Sigmoid colon (tissue), 7 donors: ENCODE measurements at regions of chr3 and their contacts with region 1.

Region 1: GRCh38 chr3:54374214-54374855 is 252.0 kb downstream of the CACNA2D3 start:
- DNase-seq: no peak
- H3K4me3 ChIP-seq: no peak overlapping the region
- H3K27ac ChIP-seq: no peak overlapping the region
- H3K4me1 ChIP-seq: no peaks in the 10 kb centered on the region
- H3K27me3 ChIP-seq: no peaks in the 10 kb centered on the region
- CTCF ChIP-seq: peak in 3 of 4 experiments; percentile 25 to 41 (median 32)
- EP300 ChIP-seq: no peak
- POLR2A ChIP-seq: no peak

Region 2: GRCh38 chr3:53941956-53942355 is 432.4 kb before region 1 on chr3:
- intact Hi-C with region 1: loop called (anchors 10 kb)
- DNase-seq: no peak
- H3K4me3 ChIP-seq: no peak overlapping the region
- H3K27ac ChIP-seq: no peak overlapping the region
- H3K4me1 ChIP-seq: peaks cover 0 to 3% (median 0%) of the 10 kb centered on the region in 4 donors
- H3K27me3 ChIP-seq: no peaks in the 10 kb centered on the region
- CTCF ChIP-seq: no peak
- EP300 ChIP-seq: no peak
- POLR2A ChIP-seq: no peak

Region 3: DNA sequence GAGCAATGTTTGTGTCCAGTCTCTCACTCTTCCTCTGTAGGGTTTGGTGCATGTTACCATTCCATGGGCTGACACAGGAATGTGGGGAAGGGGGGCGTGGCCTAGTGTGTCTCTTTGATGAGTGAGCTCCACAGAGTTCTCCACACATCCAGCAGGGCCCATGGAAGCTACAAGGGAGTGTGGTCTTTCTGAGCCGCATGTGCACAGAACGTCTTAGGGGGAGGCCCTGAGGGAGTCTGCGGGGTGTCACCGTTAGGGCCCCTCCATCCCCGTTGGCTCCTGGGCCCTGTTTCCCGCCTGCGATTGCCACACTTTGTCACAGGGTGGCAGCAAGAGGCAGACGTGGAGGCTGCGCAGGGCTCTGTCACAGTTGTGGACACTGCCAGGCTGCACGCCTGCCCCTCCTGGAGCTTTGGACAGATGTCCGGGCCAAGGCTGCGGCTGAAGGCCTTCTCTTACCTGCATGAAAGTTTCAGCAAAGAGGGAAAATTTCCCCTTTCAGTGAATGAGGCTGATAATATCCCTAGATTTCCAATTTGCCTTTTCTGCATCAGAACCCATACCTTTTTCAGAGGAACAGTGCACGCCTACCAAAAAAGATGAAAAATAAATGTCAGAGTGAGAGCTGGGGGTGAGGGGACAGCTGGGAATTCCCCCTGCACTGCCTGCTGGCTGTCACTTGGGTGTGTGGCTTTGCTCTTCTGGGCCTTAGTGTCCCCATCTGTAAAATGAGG is 227.7 kb before region 1 on chr3:
- intact Hi-C with region 1: loop called (anchors 10 kb)
- DNase-seq: no peak
- H3K4me3 ChIP-seq: no peak overlapping the region
- H3K27ac ChIP-seq: no peak overlapping the region
- H3K4me1 ChIP-seq: peaks cover 0 to 14% (median 11%) of the 10 kb centered on the region in 4 donors
- H3K27me3 ChIP-seq: no peaks in the 10 kb centered on the region
- CTCF ChIP-seq: peak; percentile 14 to 57 (median 45)
- EP300 ChIP-seq: no peak
- POLR2A ChIP-seq: no peak

Region 4: GRCh38 chr3:54322354-54322753 is 52.0 kb before region 1 on chr3:
- intact Hi-C with region 1: no loop called
- DNase-seq: no peak
- H3K4me3 ChIP-seq: no peak overlapping the region
- H3K27ac ChIP-seq: no peak overlapping the region
- H3K4me1 ChIP-seq: no peaks in the 10 kb centered on the region
- H3K27me3 ChIP-seq: no peaks in the 10 kb centered on the region
- CTCF ChIP-seq: no peak
- EP300 ChIP-seq: no peak
- POLR2A ChIP-seq: no peak